ENCODE measurements at regions of chrX and their contacts with region 1.

Region 1: DNA sequence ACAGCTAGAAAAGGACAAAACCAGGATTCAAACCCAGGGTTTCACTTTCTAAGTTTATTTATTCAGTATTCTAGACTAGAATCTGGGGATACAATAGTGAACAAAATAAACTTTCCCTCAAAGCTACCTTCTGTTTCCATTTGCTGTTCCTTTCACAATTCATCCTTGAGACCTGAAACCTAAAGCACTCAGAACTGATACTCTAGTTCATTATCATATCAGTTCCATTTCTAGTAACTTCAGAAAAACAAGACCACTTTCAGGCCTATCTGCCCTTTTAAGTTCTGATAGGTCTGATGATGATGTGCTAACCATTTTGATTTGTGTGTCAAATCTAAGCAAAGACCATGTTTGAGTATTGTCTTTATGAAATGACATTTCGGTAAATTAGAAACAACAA is 7.8 kb upstream of the XK start:
- DNase-seq: no peak
- ATAC-seq: no peak
- H3K4me3 ChIP-seq: no peak overlapping the region
- H3K27ac ChIP-seq: no peak overlapping the region
- H3K4me1 ChIP-seq: peaks cover 13% of the 10 kb centered on the region
- H3K27me3 ChIP-seq: no peaks in the 10 kb centered on the region
- CTCF ChIP-seq: no peak

Region 2: DNA sequence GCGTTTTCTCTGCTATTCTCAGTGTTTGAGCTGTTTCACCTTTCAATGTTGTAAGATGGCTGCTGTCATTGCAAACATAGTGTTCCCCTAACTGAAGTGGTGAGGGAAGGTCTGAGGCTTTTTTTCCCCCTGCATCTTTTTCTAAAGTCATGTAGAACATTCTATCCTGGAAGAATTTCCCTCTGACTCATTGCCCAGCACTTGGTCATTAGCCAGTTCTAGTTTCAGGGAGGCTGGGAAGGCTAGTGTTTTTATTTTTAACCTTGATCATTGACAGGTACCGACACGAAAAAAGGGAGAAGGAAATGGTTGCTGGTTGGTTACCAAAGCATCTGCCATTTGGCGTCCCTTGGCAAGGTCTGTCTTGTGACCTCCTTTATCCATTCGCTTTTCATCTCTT is 99.7 kb before region 1 on chrX:
- CTCF ChIA-PET with region 1: no interaction called
- POLR2A ChIA-PET with region 1: no interaction called
- intact Hi-C with region 1: loop called (anchors 5 kb)
- DNase-seq: peak; percentile 45
- ATAC-seq: no peak; the same call in 1 of the 2 replicates
- H3K4me3 ChIP-seq: no peak overlapping the region
- H3K27ac ChIP-seq: no peak overlapping the region
- H3K4me1 ChIP-seq: peaks cover 6% of the 10 kb centered on the region
- H3K27me3 ChIP-seq: no peaks in the 10 kb centered on the region
- CTCF ChIP-seq: no peak

Region 3: GRCh38 chrX:37627602-37628001 is 50.2 kb before region 1 on chrX:
- CTCF ChIA-PET with region 1: no interaction called
- POLR2A ChIA-PET with region 1: interaction called, 3 read pairs
- intact Hi-C with region 1: loop called (anchors 5 kb)
- DNase-seq: peak; percentile 64
- ATAC-seq: peak; percentile 88
- H3K4me3 ChIP-seq: no peak overlapping the region
- H3K27ac ChIP-seq: no peak overlapping the region
- H3K4me1 ChIP-seq: peaks cover 6% of the 10 kb centered on the region; the same call in 1 of the 2 replicates
- H3K27me3 ChIP-seq: no peaks in the 10 kb centered on the region
- CTCF ChIP-seq: no peak

Region 4: DNA sequence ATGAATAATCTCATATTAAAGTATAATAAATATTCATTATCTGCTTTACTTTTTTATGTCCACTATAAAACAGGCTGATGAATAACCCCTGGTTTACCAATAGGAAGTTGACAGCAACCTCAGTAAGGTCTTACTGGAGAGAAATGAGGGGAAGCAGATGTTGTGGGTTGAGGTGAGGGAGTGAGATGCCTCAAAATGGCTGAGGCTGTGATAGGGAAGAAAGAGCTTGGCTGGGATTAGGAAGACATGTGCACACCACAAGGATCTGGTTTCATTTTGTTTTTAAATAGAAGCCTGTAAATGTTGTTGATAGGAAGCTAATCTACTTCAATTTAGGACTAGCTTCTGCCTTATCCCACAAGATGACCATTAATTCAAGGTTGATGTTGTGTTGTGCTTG is 87.7 kb after region 1 on chrX:
- CTCF ChIA-PET with region 1: no interaction called
- POLR2A ChIA-PET with region 1: no interaction called
- intact Hi-C with region 1: no loop called
- DNase-seq: no peak
- ATAC-seq: no peak
- H3K4me3 ChIP-seq: no peak overlapping the region
- H3K27ac ChIP-seq: no peak overlapping the region
- H3K4me1 ChIP-seq: no peaks in the 10 kb centered on the region
- H3K27me3 ChIP-seq: no peaks in the 10 kb centered on the region
- CTCF ChIP-seq: no peak

Measured in PC-3 (cell line).